ENCODE measurements at regions of chr17 and their contacts with region 1.

Region 1: GRCh38 chr17:50620858-50621257 is 13.8 kb upstream of the ABCC3 start:
- DNase-seq: no peak
- H3K4me3 ChIP-seq: no peak overlapping the region
- H3K4me3 Mint-ChIP-seq: no peak overlapping the region
- H3K27ac ChIP-seq: no peak overlapping the region
- H3K27ac Mint-ChIP-seq: peak overlapping the region in 3 of 7 donors; percentile 76 to 88 (median 82)
- H3K4me1 ChIP-seq: peaks cover 37 to 64% of the 10 kb centered on the region in 2 donors
- H3K4me1 Mint-ChIP-seq: peaks cover 41% of the 10 kb centered on the region
- H3K27me3 ChIP-seq: no peaks in the 10 kb centered on the region
- H3K27me3 Mint-ChIP-seq: peaks cover 6 to 17% (median 11%) of the 10 kb centered on the region in 3 donors
- CTCF ChIP-seq: no peak

Region 2: DNA sequence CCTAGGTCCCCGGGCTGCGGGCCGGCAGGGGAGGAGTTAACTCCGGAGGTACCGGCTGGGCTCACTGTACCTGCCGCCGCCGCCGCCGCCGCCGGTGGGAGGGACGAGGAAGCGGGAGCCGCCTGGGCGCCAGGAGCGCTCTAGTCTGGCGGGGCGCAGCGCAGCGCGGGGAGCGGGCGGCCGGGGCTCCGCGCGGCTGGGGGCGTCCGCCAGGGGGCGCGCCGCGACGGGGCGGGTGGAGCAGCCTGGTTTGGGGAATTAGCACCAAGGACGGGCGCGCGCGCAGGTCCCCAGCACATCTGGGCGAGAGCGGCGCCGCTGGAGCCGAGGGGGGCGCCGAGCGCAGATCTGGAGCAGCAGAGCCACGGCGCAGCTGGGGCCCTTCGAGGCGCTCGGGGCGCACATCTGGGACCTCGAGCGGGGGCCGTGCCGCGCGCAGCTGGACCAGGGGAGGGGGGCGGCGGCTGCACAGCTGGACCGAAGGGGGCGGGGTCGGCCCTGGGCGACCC is 1045.2 kb before region 1 on chr17 and contains the start of gene NXPH3:
- intact Hi-C with region 1: no loop called
- DNase-seq: peak; percentile 28 to 53 (median 33)
- H3K4me3 ChIP-seq: peak within 1 kb of the TSS in 1 of 3 experiments; percentile 68
- H3K4me3 Mint-ChIP-seq: peak within 1 kb of the TSS; percentile 63 to 89
- H3K27ac ChIP-seq: no peak within 1 kb of the TSS
- H3K27ac Mint-ChIP-seq: no peak within 1 kb of the TSS
- H3K4me1 ChIP-seq: peaks cover 10 to 19% of the 10 kb centered on the region in 2 donors
- H3K4me1 Mint-ChIP-seq: peaks cover 11% of the 10 kb centered on the region
- H3K27me3 ChIP-seq: peaks cover 16 to 72% of the 10 kb centered on the region in 2 donors
- H3K27me3 Mint-ChIP-seq: peaks cover 64 to 83% (median 70%) of the 10 kb centered on the region in 3 donors
- CTCF ChIP-seq: peak; percentile 60
- polyA plus RNA-seq, gene NXPH3: not detected

Region 3: GRCh38 chr17:50560185-50560824 is 60.6 kb before region 1 on chr17 and contains the start of gene CACNA1G:
- intact Hi-C with region 1: loop called in 1 of 2 experiments (anchors 5 kb)
- DNase-seq: peak; percentile 60 to 77 (median 75)
- H3K4me3 ChIP-seq: peak within 1 kb of the TSS in 2 of 3 experiments; percentile 27 to 72
- H3K4me3 Mint-ChIP-seq: peak within 1 kb of the TSS; percentile 70 to 89
- H3K27ac ChIP-seq: no peak within 1 kb of the TSS
- H3K27ac Mint-ChIP-seq: no peak within 1 kb of the TSS
- H3K4me1 ChIP-seq: peaks cover 30 to 31% of the 10 kb centered on the region in 2 donors
- H3K4me1 Mint-ChIP-seq: peaks cover 26% of the 10 kb centered on the region
- H3K27me3 ChIP-seq: peaks cover 48 to 79% of the 10 kb centered on the region in 2 donors
- H3K27me3 Mint-ChIP-seq: peaks cover 58 to 86% (median 77%) of the 10 kb centered on the region in 3 donors
- CTCF ChIP-seq: no peak
- polyA plus RNA-seq, gene CACNA1G: 0.03 TPM in 1 of 3 donors, not detected in the others

Measured in CD14-positive monocyte (primary cell).